HEK293 (cell line): ENCODE measurements at regions of chr2 and their contacts with region 1.

Region 1: GRCh38 chr2:28594289-28595108 is 98.6 kb downstream of the PLB1 start:
- H3K4me3 ChIP-seq: no peak overlapping the region
- H3K27ac ChIP-seq: no peak overlapping the region
- H3K4me1 ChIP-seq: no peaks in the 10 kb centered on the region
- CTCF ChIP-seq: peak; percentile 78

Region 2: DNA sequence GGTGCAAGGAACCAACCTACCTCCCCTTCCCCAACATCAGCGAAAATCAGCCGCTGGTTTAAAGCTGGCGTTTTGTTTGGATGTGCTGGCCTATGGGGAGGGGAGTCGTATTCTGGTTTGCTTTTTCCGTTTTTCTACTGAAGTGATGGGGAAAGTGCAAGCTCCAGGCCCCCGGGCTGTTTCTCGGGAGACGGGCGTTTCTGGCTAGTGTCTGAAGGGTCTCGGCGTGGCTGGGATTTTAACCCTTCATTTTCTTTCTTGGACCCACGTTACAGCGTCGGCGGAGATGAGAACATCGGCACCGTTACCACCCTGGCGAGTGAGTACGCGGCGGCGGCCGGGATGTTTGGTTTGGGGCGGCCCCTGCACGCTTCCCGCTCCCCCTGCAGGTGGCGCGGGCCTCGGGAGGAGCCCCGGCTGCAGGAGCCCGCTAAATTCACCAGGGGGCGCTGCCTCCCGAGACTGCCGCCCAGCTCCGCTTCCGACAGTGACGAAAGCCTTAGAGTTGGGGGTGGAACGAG is 27.9 kb before region 1 on chr2:
- CTCF ChIA-PET with region 1: interaction called, 26 read pairs
- POLR2A ChIA-PET with region 1: no interaction called
- H3K4me3 ChIP-seq: peak overlapping the region; percentile 29
- H3K27ac ChIP-seq: no peak overlapping the region
- H3K4me1 ChIP-seq: no peaks in the 10 kb centered on the region
- CTCF ChIP-seq: peak; percentile 97

Region 3: GRCh38 chr2:28610583-28611201 is 16.2 kb after region 1 on chr2:
- CTCF ChIA-PET with region 1: interaction called, 46 read pairs
- POLR2A ChIA-PET with region 1: interaction called, 5 read pairs
- H3K4me3 ChIP-seq: no peak overlapping the region
- H3K27ac ChIP-seq: no peak overlapping the region
- H3K4me1 ChIP-seq: peaks cover 2% of the 10 kb centered on the region; the same call in 1 of the 2 replicates
- CTCF ChIP-seq: no peak

Region 4: DNA sequence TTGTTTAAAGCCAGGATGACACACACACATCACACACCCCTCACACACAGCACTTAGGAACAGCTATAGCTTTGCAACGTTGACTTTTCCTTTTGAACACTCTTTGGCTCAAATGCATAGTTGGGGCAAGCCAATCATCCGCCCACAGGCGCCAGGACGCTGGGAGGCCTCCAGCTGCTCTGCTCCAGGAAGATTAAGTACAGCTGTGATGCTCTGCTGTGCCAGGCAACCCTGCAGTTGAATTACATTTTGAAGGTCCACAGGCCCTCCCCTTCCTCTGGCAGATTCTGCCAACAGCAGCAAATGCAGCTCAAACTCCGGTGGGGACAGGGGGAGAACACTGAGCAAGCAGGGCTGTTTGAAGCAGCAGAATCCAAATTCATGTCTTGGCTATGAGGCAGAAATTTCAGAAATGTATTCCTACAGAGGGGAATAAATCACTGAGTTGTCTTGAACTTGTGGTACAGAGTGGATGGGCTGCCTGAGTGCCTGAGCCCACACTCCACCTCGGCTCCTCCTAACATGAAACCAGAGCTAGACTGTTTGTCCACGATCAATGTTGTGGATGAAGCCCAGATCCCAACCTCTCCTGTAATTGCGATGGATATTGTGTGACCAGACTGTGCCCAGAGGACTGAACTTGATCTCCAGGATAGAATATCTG is 70.7 kb after region 1 on chr2:
- CTCF ChIA-PET with region 1: interaction called, 20 read pairs
- POLR2A ChIA-PET with region 1: no interaction called
- H3K4me3 ChIP-seq: no peak overlapping the region
- H3K27ac ChIP-seq: no peak overlapping the region
- H3K4me1 ChIP-seq: 0 out of 2 replicates have a peak, but pooled peaks cover 6% of the 10 kb centered on the region
- CTCF ChIP-seq: no peak

Region 5: GRCh38 chr2:28695245-28695647 is 100.7 kb after region 1 on chr2:
- CTCF ChIA-PET with region 1: interaction called, 10 read pairs
- POLR2A ChIA-PET with region 1: no interaction called
- H3K4me3 ChIP-seq: no peak overlapping the region
- H3K27ac ChIP-seq: no peak overlapping the region
- H3K4me1 ChIP-seq: peaks cover 5% of the 10 kb centered on the region
- CTCF ChIP-seq: no peak

Region 6: GRCh38 chr2:28821295-28821958 is 226.9 kb after region 1 on chr2:
- CTCF ChIA-PET with region 1: interaction called, 13 read pairs
- POLR2A ChIA-PET with region 1: no interaction called
- H3K4me3 ChIP-seq: no peak overlapping the region
- H3K27ac ChIP-seq: no peak overlapping the region
- H3K4me1 ChIP-seq: no peaks in the 10 kb centered on the region
- CTCF ChIP-seq: peak; percentile 75

Region 7: GRCh38 chr2:29139152-29139551 is 544.7 kb after region 1 on chr2:
- CTCF ChIA-PET with region 1: no interaction called
- POLR2A ChIA-PET with region 1: no interaction called
- H3K4me3 ChIP-seq: no peak overlapping the region
- H3K27ac ChIP-seq: no peak overlapping the region
- H3K4me1 ChIP-seq: no peaks in the 10 kb centered on the region
- CTCF ChIP-seq: no peak